HepG2 (cell line): ENCODE measurements at regions of chr11 and their contacts with region 1.

Region 1: GRCh38 chr11:88103337-88104206 is 71.7 kb downstream of the RAB38 start:
- DNase-seq: peak; percentile 52
- ATAC-seq: peak; percentile 90
- H3K4me3 ChIP-seq: no peak overlapping the region
- H3K27ac ChIP-seq: no peak overlapping the region
- H3K4me1 ChIP-seq: 0 out of 2 replicates have a peak, but pooled peaks cover 8% of the 10 kb centered on the region
- H3K27me3 ChIP-seq: no peaks in the 10 kb centered on the region
- CTCF ChIP-seq: peak; percentile 73
- EP300 ChIP-seq: no peak
- POLR2A ChIP-seq: no peak
- RAD21 ChIP-seq: no peak

Region 2: DNA sequence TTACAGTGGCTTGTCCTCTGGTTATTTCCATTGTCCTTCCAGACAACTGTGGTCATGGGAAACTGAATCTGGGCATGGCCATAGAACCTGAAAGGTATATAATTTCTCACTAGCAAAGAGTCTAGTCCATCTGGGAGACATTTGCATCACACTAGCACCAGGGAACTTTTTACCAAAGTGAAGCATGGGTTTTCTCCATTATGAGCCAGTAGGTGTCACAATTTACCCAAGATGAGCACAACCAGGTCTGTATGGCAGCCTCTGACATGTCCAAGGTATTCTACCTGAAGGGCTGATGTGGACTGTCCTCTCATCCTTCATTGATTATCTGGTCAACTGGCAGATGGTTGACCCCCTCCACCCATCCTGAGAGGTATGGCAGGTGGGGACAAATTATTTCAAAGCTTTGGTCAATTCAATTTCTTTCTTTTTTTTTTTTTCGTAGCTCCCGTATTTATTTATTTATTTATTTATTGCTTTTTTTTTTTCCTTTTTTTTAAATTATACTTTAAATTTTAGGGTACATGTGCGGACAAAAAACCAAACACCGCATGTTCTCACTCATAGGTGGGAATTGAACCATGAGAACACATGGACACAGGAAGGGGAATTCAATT is 640.0 kb before region 1 on chr11:
- CTCF ChIA-PET with region 1: no interaction called
- POLR2A ChIA-PET with region 1: no interaction called
- in situ Hi-C with region 1: no loop called
- intact Hi-C with region 1: loop called (anchors 2 kb)
- DNase-seq: peak; percentile 38
- ATAC-seq: peak; percentile 94
- H3K4me3 ChIP-seq: no peak overlapping the region
- H3K27ac ChIP-seq: no peak overlapping the region
- H3K4me1 ChIP-seq: no peaks in the 10 kb centered on the region
- H3K27me3 ChIP-seq: no peaks in the 10 kb centered on the region; a peak in 2 of 5 replicates
- CTCF ChIP-seq: peak; percentile 66
- EP300 ChIP-seq: no peak
- POLR2A ChIP-seq: no peak
- RAD21 ChIP-seq: no peak

Region 3: DNA sequence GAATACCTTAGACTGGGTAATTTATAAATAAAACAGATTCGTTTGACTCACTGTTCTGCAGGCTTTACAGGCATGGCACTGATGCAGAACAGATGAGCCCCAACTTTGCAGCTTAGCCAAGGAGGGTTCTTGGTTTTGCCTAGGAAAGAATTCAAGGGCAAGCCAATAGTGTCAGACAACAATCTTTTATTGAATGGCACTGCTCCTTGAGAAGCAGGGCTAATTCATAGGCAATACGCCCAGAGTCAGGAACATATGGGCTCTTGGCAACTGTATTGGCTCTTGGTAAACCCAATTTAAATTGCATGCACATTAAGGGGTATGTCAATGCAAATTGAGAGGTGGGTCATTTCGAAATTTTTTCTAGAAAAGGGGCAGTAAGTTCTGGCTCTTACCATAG is 16.2 kb before region 1 on chr11:
- CTCF ChIA-PET with region 1: no interaction called
- POLR2A ChIA-PET with region 1: no interaction called
- in situ Hi-C with region 1: no loop called
- intact Hi-C with region 1: no loop called
- DNase-seq: no peak
- ATAC-seq: no peak
- H3K4me3 ChIP-seq: no peak overlapping the region
- H3K27ac ChIP-seq: no peak overlapping the region
- H3K4me1 ChIP-seq: no peaks in the 10 kb centered on the region
- H3K27me3 ChIP-seq: no peaks in the 10 kb centered on the region
- CTCF ChIP-seq: no peak
- EP300 ChIP-seq: no peak
- POLR2A ChIP-seq: no peak
- RAD21 ChIP-seq: no peak

Region 4: DNA sequence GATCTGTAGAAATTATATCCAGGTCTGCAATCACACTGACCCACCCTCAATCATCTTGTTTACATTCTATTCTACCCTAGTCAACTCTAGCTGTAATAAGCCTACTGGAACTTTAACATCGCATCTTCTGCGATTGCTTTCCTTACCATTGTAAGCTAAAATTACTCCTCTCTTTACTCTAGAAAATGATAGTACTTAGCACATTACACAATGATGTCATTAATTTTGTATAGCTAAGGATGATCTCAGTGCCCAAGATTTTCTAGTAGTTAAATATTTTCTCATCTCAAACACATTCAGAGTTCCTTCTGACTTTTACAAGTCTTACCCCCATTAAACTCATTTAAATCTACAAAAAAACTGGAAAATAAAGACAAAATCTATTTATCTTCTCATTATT is 273.6 kb after region 1 on chr11:
- CTCF ChIA-PET with region 1: no interaction called
- POLR2A ChIA-PET with region 1: no interaction called
- in situ Hi-C with region 1: no loop called
- intact Hi-C with region 1: no loop called
- DNase-seq: no peak
- ATAC-seq: no peak
- H3K4me3 ChIP-seq: no peak overlapping the region
- H3K27ac ChIP-seq: no peak overlapping the region
- H3K4me1 ChIP-seq: no peaks in the 10 kb centered on the region
- H3K27me3 ChIP-seq: no peaks in the 10 kb centered on the region
- CTCF ChIP-seq: no peak
- EP300 ChIP-seq: no peak
- POLR2A ChIP-seq: no peak
- RAD21 ChIP-seq: no peak